ENCODE measurements at regions of chr1 and their contacts with region 1.

Region 1: GRCh38 chr1:40040511-40041465 is at the start of gene CAP1:
- DNase-seq: peak; percentile 98
- H3K4me3 ChIP-seq: peak within 1 kb of the TSS; percentile 96
- H3K27ac ChIP-seq: peak within 1 kb of the TSS; percentile 99
- H3K4me1 ChIP-seq: peaks cover 49% of the 10 kb centered on the region
- CTCF ChIP-seq: no peak
- total RNA-seq, gene CAP1: 184 and 193 TPM in 2 replicates

Region 2: DNA sequence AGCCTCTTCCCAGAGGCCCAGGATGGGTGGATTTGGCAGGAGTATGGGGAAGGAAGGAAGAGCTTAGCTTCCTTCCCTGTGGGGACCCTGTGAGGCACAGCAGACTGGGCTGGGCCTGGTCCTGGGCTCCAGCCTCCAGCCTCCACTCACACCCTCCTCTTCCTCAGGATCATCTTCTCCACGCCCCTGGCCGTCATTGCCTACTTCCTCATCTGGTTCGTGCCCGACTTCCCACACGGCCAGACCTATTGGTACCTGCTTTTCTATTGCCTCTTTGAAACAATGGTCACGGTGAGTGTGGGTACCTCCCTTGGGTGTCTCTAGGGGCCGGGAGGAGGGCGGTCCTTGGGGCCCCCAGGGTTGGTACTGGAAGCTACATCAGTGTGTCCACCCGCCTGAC is 75.7 kb before region 1 on chr1:
- CTCF ChIA-PET with region 1: no interaction called
- POLR2A ChIA-PET with region 1: no interaction called
- intact Hi-C with region 1: no loop called
- DNase-seq: no peak
- H3K4me3 ChIP-seq: no peak overlapping the region
- H3K27ac ChIP-seq: no peak overlapping the region
- H3K4me1 ChIP-seq: peaks cover 17% of the 10 kb centered on the region
- CTCF ChIP-seq: no peak

Region 3: GRCh38 chr1:39995973-39996393 is 44.8 kb before region 1 on chr1:
- CTCF ChIA-PET with region 1: no interaction called
- POLR2A ChIA-PET with region 1: no interaction called
- intact Hi-C with region 1: loop called (anchors 2 kb)
- DNase-seq: peak; percentile 89
- H3K4me3 ChIP-seq: peak overlapping the region; percentile 15
- H3K27ac ChIP-seq: peak overlapping the region; percentile 69
- H3K4me1 ChIP-seq: peaks cover 29% of the 10 kb centered on the region
- CTCF ChIP-seq: 0 out of 2 replicates have a peak, but pooled peaks have one; percentile 18

Region 4: DNA sequence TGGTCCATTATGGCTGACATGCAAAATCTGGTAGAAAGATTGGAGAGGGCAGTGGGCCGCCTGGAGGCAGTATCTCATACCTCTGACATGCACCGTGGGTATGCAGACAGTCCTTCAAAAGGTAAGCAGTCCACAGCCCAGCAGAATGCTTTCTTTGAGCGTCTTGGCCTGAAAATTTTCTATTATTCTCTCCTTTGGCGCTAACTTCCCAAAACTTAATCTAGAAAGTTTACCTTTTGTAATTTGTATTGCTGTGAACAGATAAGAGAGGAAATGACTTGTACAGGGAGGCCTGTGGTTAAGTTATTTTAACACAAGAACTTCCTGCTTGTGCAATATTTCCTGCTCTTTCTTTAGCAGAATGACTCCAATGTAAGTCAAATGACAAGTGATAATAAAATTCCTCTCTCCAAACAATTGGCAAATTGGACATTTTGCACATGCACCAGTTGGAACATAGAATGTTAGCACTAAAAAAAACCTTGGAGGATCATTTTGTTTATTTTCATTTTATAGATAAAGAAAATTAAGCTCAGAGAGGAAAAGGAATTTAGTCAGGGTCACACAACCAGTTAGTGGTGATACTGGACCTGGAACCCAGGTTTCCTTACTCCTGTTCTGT is 18.7 kb after region 1 on chr1:
- CTCF ChIA-PET with region 1: interaction called, 3 read pairs
- POLR2A ChIA-PET with region 1: interaction called, 54 read pairs
- intact Hi-C with region 1: loop called (anchors 1 kb)
- DNase-seq: peak; percentile 78
- H3K4me3 ChIP-seq: peak overlapping the region; percentile 54
- H3K27ac ChIP-seq: peak overlapping the region; percentile 90
- H3K4me1 ChIP-seq: peaks cover 83% of the 10 kb centered on the region
- CTCF ChIP-seq: peak; percentile 75

Region 5: DNA sequence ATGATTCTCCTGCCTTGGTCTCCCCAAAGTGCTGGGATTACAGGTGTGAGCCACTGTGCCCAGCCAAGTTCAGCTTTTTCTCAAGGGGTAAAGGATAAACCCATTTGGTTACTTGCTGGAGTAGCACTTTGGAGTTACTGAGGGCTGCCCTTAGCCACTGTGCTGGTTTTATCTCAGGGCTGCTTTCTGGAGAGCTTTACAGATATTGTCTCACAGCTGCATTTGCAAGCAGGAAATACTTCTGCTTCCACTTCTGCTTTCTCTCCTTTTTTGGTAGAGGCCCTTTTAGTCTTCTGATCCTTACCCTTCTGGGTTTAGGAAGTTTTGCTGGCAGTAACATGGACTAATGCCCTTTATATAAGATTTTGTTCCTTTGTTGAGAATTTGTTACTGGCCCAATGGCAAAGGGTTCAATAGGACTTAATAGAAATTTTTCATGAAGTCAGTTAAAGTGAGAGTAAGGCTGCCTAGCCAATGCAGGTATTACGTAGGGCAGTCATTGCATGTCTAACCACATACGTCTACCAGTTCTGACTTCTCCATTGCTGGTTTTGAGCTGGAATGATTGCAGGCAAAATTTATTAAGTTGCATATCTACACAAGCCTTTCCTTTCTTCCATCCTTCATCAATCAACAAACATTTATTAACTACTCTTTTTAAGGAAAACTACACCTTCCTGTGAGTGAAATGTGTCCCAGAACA is 24.2 kb after region 1 on chr1:
- CTCF ChIA-PET with region 1: interaction called, 3 read pairs
- POLR2A ChIA-PET with region 1: interaction called, 54 read pairs
- intact Hi-C with region 1: loop called (anchors 1 kb)
- DNase-seq: peak; percentile 86
- H3K4me3 ChIP-seq: peak overlapping the region; percentile 30
- H3K27ac ChIP-seq: peak overlapping the region; percentile 90
- H3K4me1 ChIP-seq: peaks cover 65% of the 10 kb centered on the region
- CTCF ChIP-seq: no peak

Region 6: DNA sequence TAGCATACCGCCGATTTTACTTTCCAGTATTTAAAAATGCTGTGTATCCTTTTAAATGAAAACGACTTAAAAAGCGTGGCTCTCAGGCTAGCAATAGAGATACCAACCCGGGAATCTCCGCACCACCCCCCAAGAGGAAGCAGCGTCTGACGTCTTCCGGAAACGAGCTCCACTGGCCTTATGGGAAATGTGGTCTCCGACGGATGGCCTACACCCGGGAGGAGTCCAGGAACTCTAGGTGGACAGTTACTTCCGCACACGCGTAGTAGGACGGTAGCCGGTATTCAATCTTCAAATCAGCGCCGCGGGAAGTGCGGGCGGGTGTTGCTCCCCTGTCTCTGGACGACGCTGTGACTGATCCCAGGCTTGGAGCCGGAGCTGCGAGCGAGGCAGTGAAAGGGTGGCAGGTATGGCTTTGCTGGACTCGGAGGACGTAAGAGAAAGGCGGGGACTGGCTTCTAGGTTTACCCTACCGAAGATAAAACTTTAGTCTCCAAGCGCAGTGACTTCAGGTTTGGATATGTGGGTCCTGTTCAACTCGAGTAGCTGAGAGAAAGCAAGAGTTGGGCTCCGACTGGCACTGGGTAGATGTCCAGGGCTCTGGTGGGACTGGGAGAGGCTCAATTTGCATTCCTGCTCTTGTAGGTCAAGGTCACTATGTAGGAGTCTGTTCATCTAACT is 490.7 kb after region 1 on chr1 and contains the start of gene ZNF684:
- CTCF ChIA-PET with region 1: no interaction called
- POLR2A ChIA-PET with region 1: no interaction called
- intact Hi-C with region 1: no loop called
- DNase-seq: peak; percentile 95
- H3K4me3 ChIP-seq: peak within 1 kb of the TSS; percentile 81
- H3K27ac ChIP-seq: peak within 1 kb of the TSS; percentile 16
- H3K4me1 ChIP-seq: peaks cover 15% of the 10 kb centered on the region
- CTCF ChIP-seq: no peak
- total RNA-seq, gene ZNF684: 5.4 and 6.7 TPM in 2 replicates